ENCODE measurements at regions of chr3 and their contacts with region 1.

Region 1: GRCh38 chr3:49171119-49171774 is at the start of gene KLHDC8B:
- DNase-seq: peak; percentile 91 to 96 (median 95)
- ATAC-seq: peak; percentile 91 to 94
- H3K4me3 ChIP-seq: peak within 1 kb of the TSS; percentile 40
- H3K27ac ChIP-seq: peak within 1 kb of the TSS; percentile 71
- H3K4me1 ChIP-seq: peaks cover 17% of the 10 kb centered on the region
- H3K27me3 ChIP-seq: no peaks in the 10 kb centered on the region
- total RNA-seq, gene KLHDC8B: 54.7 to 74.6 (median 60.3) TPM

Region 2: DNA sequence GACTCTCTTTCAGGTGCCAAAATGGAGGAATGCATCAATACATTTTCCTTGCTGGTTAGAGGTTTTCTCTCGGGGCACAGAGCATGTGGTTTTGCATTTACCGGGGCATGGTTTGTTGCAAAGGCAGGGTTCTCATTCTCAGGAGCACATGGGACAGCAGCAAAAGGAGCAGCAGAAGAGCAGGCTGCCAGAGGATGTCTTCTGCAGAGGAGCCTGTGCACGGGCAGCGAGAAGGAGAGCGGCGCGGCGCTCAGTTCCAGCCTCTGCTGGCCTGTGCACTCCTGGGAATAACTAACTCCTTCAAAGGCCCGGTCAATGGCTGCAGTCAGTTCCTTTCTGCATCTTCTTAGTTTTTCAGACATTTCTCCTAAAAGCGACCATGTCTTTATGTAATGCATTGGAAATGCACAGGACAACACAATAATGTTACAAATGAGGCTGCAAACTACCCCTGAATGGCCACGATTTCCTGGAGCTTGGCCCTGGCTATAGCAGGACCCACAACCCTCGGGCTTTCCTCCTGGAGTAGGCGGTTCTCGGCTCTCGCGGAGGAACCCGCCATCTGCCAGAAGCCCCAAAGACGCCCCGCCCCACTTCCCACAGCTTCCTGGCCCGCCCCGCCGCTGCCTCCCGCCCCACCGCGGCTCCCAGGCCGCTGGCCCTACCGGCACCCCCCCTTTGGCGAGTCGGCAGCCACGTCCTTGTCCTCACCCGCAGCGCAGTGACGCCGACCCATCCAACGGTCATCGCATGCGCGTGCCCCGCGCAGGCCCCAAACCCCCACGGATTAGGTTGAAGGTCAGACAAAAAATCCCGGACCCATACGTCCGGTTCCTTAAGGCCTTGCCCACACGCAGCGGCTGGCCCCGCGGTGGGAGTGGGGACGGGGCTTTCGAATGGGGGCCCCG is 105.5 kb after region 1 on chr3 and contains the start of gene C3orf62:
- intact Hi-C with region 1: loop called in 3 of 4 experiments (anchors 2 to 5 kb)
- DNase-seq: peak; percentile 94 to 98 (median 97)
- ATAC-seq: peak; percentile 94 to 97
- H3K4me3 ChIP-seq: peak within 1 kb of the TSS; percentile 58
- H3K27ac ChIP-seq: peak within 1 kb of the TSS; percentile 83
- H3K4me1 ChIP-seq: peaks cover 10% of the 10 kb centered on the region
- H3K27me3 ChIP-seq: no peaks in the 10 kb centered on the region
- total RNA-seq, gene C3orf62: 3.2 to 3.8 (median 3.4) TPM

Region 3: DNA sequence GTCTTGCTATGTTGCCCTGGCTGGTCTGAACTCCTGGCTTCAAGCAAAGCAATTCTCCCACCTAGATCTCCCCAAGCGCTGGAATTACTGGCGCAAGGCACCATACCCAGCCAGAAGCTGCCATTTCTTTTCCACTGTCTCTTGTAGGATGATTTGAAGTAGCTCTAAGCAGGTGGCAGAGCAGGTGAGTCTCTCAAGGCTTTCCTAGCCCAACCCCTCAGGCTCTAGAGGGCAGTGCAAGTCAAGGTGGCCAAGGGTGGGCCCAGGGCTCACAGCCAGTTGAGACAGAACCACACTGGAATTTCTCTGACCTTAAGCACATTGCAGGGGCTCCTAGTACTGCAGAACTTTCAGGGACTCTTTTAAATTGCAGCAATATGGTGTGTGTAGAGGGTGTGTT is 283.2 kb after region 1 on chr3:
- intact Hi-C with region 1: loop called in 1 of 4 experiments (anchors 10 kb)
- DNase-seq: no peak
- ATAC-seq: peak; percentile 58 to 64
- H3K4me3 ChIP-seq: no peak overlapping the region
- H3K27ac ChIP-seq: peak overlapping the region; percentile 42
- H3K4me1 ChIP-seq: no peaks in the 10 kb centered on the region
- H3K27me3 ChIP-seq: no peaks in the 10 kb centered on the region

Region 4: DNA sequence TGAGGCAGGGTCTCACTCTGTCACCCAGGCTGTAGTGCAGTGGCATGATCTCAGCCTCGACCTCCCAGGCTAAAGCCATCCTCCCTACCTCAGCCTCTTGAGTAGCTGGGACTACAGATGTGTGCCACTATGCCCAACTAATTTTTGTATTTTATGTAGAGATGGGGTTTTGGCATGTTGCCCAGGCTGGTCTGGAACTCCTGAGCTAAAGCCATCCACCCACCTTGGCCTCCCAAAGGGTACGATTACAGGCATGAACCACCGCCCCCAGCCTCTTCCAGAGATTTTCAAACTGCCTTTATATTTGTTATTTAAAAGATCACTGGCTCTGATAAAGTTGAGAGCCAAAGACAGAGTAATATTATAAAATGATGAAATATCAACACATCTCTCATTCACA is 420.4 kb after region 1 on chr3:
- intact Hi-C with region 1: no loop called
- DNase-seq: no peak
- ATAC-seq: no peak
- H3K4me3 ChIP-seq: no peak overlapping the region
- H3K27ac ChIP-seq: no peak overlapping the region
- H3K4me1 ChIP-seq: no peaks in the 10 kb centered on the region
- H3K27me3 ChIP-seq: no peaks in the 10 kb centered on the region